ENCODE measurements at regions of chr1 and their contacts with region 1.

Region 1: GRCh38 chr1:8015036-8015808 is 10.9 kb downstream of the ERRFI1 start:
- DNase-seq: peak; percentile 65 to 82 (median 77)
- H3K4me3 ChIP-seq: no peak overlapping the region
- H3K27ac ChIP-seq: no peak overlapping the region
- H3K4me1 ChIP-seq: no peaks in the 10 kb centered on the region
- H3K27me3 ChIP-seq: peaks cover 8 to 18% (median 11%) of the 10 kb centered on the region in 5 experiments

Region 2: DNA sequence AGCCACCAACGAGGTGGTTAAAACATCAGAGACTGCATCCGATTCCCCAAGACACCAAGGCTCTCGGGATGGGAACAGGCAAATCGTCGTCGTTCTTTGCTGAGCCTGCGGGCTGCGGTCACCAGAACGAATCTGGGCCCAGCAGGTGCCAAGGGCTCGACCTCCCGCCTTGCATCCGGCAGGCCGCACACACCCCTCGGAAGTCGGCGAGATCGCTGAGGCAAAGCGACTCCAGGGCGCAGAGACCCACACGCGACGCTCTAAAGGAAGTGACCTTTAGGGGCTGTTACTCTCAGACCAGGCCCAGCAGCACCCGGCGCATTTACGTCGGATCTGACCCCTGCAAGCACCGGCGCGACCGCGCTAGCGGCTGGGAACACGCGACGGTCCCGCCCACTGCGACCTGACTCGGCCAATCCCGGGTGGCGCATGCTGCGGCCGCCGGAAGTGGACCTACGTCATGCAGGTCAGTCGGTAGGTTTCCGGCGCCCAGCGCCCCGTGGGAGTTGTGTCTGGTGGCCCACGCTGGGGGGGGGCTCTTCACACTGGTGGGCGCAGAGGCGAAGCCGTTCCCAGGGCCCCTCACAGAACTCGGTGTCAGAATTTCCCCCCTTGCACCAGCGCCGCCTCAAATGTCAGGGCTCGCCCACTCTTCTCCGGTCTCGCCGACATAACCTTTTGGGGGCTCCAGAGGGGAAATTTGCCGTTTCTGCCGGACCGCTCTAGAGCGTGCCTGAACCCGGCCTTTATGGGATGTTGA is 61.2 kb before region 1 on chr1:
- CTCF ChIA-PET with region 1: no interaction called
- POLR2A ChIA-PET with region 1: no interaction called
- DNase-seq: peak; percentile 69 to 92 (median 86)
- H3K4me3 ChIP-seq: peak overlapping the region; percentile 50 to 83 (median 64)
- H3K27ac ChIP-seq: peak overlapping the region; percentile 77 to 91
- H3K4me1 ChIP-seq: peaks cover 0 to 16% (median 11%) of the 10 kb centered on the region in 4 experiments
- H3K27me3 ChIP-seq: peaks cover 0 to 2% (median 0%) of the 10 kb centered on the region in 5 experiments

Region 3: DNA sequence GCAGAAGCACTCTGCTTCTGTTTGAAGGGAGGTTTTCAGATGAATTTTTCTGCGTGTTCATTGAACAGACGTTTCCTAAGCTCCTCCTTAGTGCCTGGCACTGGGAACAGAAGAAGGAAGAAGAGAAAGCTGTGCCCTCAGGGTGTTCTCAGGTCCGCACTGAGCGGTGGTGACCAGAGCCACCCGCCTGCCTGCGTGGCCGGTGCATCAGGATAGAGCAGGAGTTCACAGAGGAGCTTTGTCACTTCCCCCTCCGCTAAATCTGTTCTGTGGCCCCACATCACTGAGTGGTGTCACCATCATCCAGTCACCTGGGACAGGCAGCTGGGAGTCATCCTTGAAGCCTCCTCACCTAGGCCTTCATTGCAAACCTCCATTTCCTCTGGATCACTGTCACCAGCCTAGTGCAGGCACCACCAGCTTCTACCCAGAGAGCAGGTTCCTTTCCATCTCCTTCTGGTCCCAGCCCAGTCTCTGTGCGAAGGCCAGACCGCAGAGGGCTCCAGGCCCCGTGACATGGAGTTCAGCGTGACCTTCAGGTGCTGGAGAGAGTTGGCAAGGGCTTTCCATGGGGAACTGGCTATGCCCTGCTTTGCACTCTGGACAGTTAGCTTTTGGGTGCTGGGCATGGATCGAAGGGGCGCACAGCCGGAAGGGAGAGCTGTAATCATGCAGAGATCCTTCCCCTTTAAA is 32.0 kb before region 1 on chr1:
- CTCF ChIA-PET with region 1: interaction called, 11 read pairs
- POLR2A ChIA-PET with region 1: no interaction called
- DNase-seq: no peak
- H3K4me3 ChIP-seq: no peak overlapping the region
- H3K27ac ChIP-seq: no peak overlapping the region
- H3K4me1 ChIP-seq: no peaks in the 10 kb centered on the region
- H3K27me3 ChIP-seq: no peaks in the 10 kb centered on the region

Region 4: DNA sequence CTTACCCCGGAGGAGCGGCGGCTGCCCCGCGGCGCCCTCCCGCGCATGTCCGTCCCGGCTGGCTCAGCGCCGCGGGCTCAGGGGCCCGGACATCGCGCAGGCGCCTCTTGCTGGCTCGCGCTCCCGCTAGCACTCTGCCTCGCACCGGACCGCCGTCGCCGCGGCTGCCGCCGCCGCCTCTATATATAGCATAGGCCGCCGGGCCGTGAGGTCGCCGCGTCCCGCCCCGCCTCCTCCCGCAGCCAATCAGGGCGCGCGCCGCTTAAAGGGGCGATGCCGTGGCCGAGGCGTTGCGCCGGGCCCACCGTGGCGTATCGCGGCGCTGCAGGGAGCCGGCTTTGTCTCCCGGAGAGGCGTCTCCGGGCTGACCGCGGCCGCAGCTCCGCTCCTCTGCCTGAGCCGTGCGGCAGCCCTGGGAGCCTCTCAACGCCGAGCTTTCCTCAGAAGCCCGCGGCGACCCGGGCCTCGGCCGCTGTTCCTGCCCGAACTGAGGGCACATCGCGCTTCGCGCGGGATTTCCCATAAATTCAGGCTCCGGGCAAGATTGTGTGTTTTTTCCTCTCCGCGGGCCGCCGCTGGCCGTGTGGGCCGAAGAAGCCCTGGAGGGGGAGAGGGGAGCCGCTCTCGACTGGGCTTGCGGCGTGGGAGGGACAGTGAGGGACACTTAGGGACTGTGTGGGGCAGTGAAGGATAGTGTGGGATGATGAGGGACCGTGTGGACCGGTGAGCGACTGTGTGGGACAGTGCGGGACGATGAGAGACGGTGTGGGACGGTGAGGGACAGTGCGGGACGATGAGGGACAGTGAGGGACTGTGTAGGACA is 11.1 kb after region 1 on chr1 and contains the start of gene ERRFI1:
- CTCF ChIA-PET with region 1: interaction called, 10 read pairs
- POLR2A ChIA-PET with region 1: no interaction called
- DNase-seq: peak; percentile 86 to 92 (median 90)
- H3K4me3 ChIP-seq: peak within 1 kb of the TSS in 4 of 7 experiments; percentile 40 to 62 (median 56)
- H3K27ac ChIP-seq: no peak within 1 kb of the TSS
- H3K4me1 ChIP-seq: peaks cover 4 to 15% (median 14%) of the 10 kb centered on the region in 4 experiments
- H3K27me3 ChIP-seq: peaks cover 19 to 52% (median 28%) of the 10 kb centered on the region in 5 experiments

Region 5: GRCh38 chr1:8314346-8315280 is 299.4 kb after region 1 on chr1:
- CTCF ChIA-PET with region 1: interaction called, 89 read pairs
- POLR2A ChIA-PET with region 1: interaction called, 3 read pairs
- DNase-seq: peak in 2 of 3 donors; percentile 34 to 36
- H3K4me3 ChIP-seq: no peak overlapping the region
- H3K27ac ChIP-seq: no peak overlapping the region
- H3K4me1 ChIP-seq: peaks cover 0 to 15% (median 10%) of the 10 kb centered on the region in 4 experiments
- H3K27me3 ChIP-seq: peaks cover 0 to 53% (median 16%) of the 10 kb centered on the region in 5 experiments